Heart right ventricle (tissue), 16 donors: ENCODE measurements at regions of chr1 and their contacts with region 1.

Region 1: GRCh38 chr1:201625851-201626251 is 86.9 kb downstream of the NAV1 start:
- DNase-seq: no peak
- ATAC-seq: no peak
- H3K4me3 ChIP-seq: no peak overlapping the region
- H3K27ac ChIP-seq: peak overlapping the region in 1 of 10 donors; percentile 34
- H3K4me1 ChIP-seq: peaks cover 6 to 45% (median 33%) of the 10 kb centered on the region in 9 donors
- H3K27me3 ChIP-seq: no peaks in the 10 kb centered on the region
- CTCF ChIP-seq: no peak

Region 2: GRCh38 chr1:201608635-201609395 is 17.0 kb before region 1 on chr1:
- intact Hi-C with region 1: loop called in 1 of 10 experiments (anchors 2 kb)
- DNase-seq: no peak
- ATAC-seq: peak; percentile 22 to 75 (median 47)
- H3K4me3 ChIP-seq: no peak overlapping the region
- H3K27ac ChIP-seq: peak overlapping the region in 1 of 10 donors; percentile 21
- H3K4me1 ChIP-seq: peaks cover 0 to 69% (median 47%) of the 10 kb centered on the region in 9 donors
- H3K27me3 ChIP-seq: no peaks in the 10 kb centered on the region
- CTCF ChIP-seq: no peak